PC-9 (cell line): ENCODE measurements at regions of chr13 and their contacts with region 1.

Region 1: GRCh38 chr13:50676602-50677001 is 166.9 kb downstream of the DLEU7 start:
- DNase-seq: peak; percentile 57 to 95
- H3K4me3 ChIP-seq: no peak overlapping the region
- H3K27ac ChIP-seq: peak overlapping the region; percentile 90
- H3K4me1 ChIP-seq: peaks cover 77% of the 10 kb centered on the region
- H3K27me3 ChIP-seq: no peaks in the 10 kb centered on the region
- CTCF ChIP-seq: no peak

Region 2: GRCh38 chr13:50123862-50124536 is 552.6 kb before region 1 on chr13:
- CTCF ChIA-PET with region 1: no interaction called
- POLR2A ChIA-PET with region 1: no interaction called
- intact Hi-C with region 1: loop called (anchors 10 kb)
- DNase-seq: peak; percentile 82 to 93
- H3K4me3 ChIP-seq: peak overlapping the region; percentile 91
- H3K27ac ChIP-seq: peak overlapping the region; percentile 80
- H3K4me1 ChIP-seq: peaks cover 24% of the 10 kb centered on the region
- H3K27me3 ChIP-seq: no peaks in the 10 kb centered on the region
- CTCF ChIP-seq: no peak

Region 3: DNA sequence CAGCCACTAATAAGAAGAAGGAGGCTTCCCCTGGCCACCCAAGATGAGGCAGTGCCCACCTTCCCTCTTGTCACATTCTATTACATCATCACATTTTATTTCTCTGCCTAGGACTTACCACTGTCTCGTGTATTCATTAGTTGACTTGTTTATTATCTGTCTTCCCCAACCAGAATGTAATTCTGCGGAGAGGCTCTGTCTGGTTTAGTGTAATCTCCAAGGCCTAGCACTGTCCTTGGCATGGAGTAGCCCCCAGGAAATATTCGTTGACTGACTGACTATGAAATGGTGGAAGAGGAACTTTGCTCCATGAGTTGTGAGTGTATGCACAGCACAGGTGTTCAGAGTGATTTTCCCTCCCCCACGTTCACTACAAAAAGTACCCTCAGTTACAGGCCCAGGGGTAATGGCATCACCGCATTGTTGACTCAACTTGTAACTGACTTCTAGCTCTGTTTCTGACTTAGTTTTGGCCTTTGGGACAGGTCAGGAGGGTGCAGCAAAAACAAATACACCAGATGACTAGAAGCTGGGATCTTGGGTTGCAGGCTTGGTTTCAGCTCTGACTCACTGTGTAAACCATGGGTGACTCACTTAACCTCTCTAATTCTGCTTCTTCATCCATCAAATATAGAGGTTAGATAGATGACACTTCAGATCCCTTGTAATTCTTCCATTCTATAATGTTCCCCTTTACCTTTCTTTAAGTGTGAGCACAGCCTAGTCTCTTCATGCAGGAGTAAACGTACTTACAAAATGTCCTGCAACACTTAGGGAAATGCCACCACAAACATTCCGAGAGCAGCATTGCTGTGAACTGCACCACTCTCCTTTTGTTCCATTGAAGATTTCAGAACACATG is 431.7 kb before region 1 on chr13:
- CTCF ChIA-PET with region 1: no interaction called
- POLR2A ChIA-PET with region 1: no interaction called
- intact Hi-C with region 1: loop called (anchors 5 kb)
- DNase-seq: peak; percentile 72 to 97
- H3K4me3 ChIP-seq: no peak overlapping the region
- H3K27ac ChIP-seq: peak overlapping the region; percentile 67
- H3K4me1 ChIP-seq: peaks cover 23% of the 10 kb centered on the region
- H3K27me3 ChIP-seq: no peaks in the 10 kb centered on the region
- CTCF ChIP-seq: no peak

Region 4: DNA sequence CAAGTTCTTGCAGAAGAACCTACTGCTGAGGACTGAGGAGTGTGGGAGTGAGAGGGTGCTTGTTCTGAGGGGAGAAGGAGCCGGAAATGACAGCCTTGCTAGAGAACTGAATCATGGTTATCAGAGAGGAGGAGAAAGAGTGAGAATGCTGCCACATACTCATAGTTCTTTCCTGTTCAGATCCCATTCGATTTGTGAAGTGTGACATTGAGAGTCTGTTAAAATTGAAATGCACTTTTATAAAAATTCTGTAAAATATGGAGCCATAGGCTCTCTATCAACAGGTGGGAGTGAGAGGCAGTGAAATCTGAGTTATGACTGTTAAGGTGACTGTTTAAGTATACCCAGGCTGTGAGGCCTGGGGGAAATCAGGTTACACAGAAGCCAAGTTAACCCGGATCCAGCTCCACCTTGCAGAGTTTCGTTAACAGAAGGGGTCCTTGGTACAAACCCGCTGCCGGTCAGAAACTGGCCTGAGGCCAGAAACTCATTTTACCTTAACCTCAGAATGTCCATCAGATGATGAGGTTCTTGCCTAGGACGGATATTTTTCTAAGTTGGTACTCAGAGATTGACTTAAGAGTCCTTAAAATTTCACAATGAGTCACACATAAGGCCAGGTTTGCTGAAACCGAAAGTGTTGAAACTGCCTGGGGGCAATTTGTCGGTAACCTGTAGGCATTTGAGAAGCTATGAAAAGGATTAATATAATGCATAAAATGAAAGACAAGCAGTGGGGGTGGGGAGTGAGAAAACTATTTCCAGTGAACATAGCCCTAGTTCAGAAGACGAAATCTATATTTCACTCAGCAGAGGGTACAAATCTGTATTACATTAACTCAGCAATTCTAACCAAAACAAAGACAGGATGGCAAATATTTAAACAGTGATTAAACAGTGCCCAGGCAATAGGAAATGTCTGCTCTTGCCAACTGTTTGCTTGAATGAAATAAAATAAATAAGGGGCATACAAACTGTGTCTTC is 310.9 kb before region 1 on chr13:
- CTCF ChIA-PET with region 1: no interaction called
- POLR2A ChIA-PET with region 1: no interaction called
- intact Hi-C with region 1: no loop called
- DNase-seq: peak; percentile 73 to 93
- H3K4me3 ChIP-seq: peak overlapping the region; percentile 45
- H3K27ac ChIP-seq: peak overlapping the region; percentile 95
- H3K4me1 ChIP-seq: peaks cover 31% of the 10 kb centered on the region
- H3K27me3 ChIP-seq: no peaks in the 10 kb centered on the region
- CTCF ChIP-seq: no peak

Region 5: GRCh38 chr13:50645092-50645491 is 31.5 kb before region 1 on chr13:
- CTCF ChIA-PET with region 1: no interaction called
- POLR2A ChIA-PET with region 1: no interaction called
- intact Hi-C with region 1: loop called (anchors 1 kb)
- DNase-seq: peak in 1 of 2 experiments; percentile 82
- H3K4me3 ChIP-seq: peak overlapping the region; percentile 15; the same call in 1 of the 2 replicates
- H3K27ac ChIP-seq: peak overlapping the region; percentile 90
- H3K4me1 ChIP-seq: peaks cover 34% of the 10 kb centered on the region
- H3K27me3 ChIP-seq: no peaks in the 10 kb centered on the region
- CTCF ChIP-seq: no peak

Region 6: DNA sequence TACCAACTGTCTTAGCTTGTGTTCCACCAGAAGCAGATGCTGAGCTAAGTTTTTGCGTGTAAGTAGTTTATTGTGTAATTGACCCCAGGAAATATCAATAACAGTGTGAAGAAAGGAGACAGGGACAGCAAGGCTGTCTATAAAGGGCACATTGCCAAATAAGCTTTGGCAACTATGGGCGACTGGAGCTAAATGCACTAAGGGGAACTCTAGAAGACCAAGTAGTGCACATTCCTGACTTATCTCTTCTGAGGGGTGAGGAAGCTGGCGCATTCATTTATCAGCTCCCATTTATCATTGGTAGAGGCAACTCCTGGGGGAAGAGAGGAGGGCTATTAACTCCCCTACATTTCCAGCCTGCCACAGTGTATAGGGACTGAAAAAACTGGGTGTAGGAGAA is 31.9 kb after region 1 on chr13:
- CTCF ChIA-PET with region 1: no interaction called
- POLR2A ChIA-PET with region 1: interaction called, 10 read pairs
- intact Hi-C with region 1: no loop called
- DNase-seq: no peak
- H3K4me3 ChIP-seq: no peak overlapping the region
- H3K27ac ChIP-seq: no peak overlapping the region
- H3K4me1 ChIP-seq: no peaks in the 10 kb centered on the region
- H3K27me3 ChIP-seq: no peaks in the 10 kb centered on the region
- CTCF ChIP-seq: no peak

Region 7: GRCh38 chr13:50801087-50801931 is 124.7 kb after region 1 on chr13:
- CTCF ChIA-PET with region 1: no interaction called
- POLR2A ChIA-PET with region 1: no interaction called
- intact Hi-C with region 1: loop called (anchors 2 kb)
- DNase-seq: peak in 1 of 2 experiments; percentile 47
- H3K4me3 ChIP-seq: no peak overlapping the region
- H3K27ac ChIP-seq: no peak overlapping the region
- H3K4me1 ChIP-seq: peaks cover 6% of the 10 kb centered on the region; the same call in 1 of the 2 replicates
- H3K27me3 ChIP-seq: no peaks in the 10 kb centered on the region
- CTCF ChIP-seq: peak; percentile 76